MCF 10A (cell line): ENCODE measurements at regions of chr17 and their contacts with region 1.

Region 1: GRCh38 chr17:77957857-77958715 is at the start of gene TNRC6C:
- DNase-seq: peak; percentile 97
- H3K4me3 Mint-ChIP-seq: peak within 1 kb of the TSS; percentile 87
- H3K27ac Mint-ChIP-seq: no peak within 1 kb of the TSS
- H3K4me1 Mint-ChIP-seq: peaks cover 13% of the 10 kb centered on the region
- H3K27me3 Mint-ChIP-seq: peaks cover 43% of the 10 kb centered on the region
- CTCF ChIP-seq: no peak
- total RNA-seq, gene TNRC6C: 15.7 and 16.4 TPM in 2 replicates

Region 2: GRCh38 chr17:77772461-77772897 is 185.6 kb before region 1 on chr17:
- CTCF ChIA-PET with region 1: no interaction called
- POLR2A ChIA-PET with region 1: no interaction called
- intact Hi-C with region 1: loop called (anchors 1 kb)
- DNase-seq: peak; percentile 55
- H3K4me3 Mint-ChIP-seq: no peak overlapping the region
- H3K27ac Mint-ChIP-seq: no peak overlapping the region
- H3K4me1 Mint-ChIP-seq: peaks cover 5% of the 10 kb centered on the region
- H3K27me3 Mint-ChIP-seq: peaks cover 16% of the 10 kb centered on the region
- CTCF ChIP-seq: peak; percentile 67

Region 3: GRCh38 chr17:77968788-77969187 is 10.7 kb after region 1 on chr17:
- CTCF ChIA-PET with region 1: interaction called, 4 read pairs
- POLR2A ChIA-PET with region 1: interaction called, 13 read pairs
- intact Hi-C with region 1: no loop called
- DNase-seq: no peak
- H3K4me3 Mint-ChIP-seq: no peak overlapping the region
- H3K27ac Mint-ChIP-seq: no peak overlapping the region
- H3K4me1 Mint-ChIP-seq: no peaks in the 10 kb centered on the region
- H3K27me3 Mint-ChIP-seq: no peaks in the 10 kb centered on the region
- CTCF ChIP-seq: no peak